ENCODE measurements at regions of chr4 and their contacts with region 1.

Region 1: GRCh38 chr4:128552586-128552907 is 257.0 kb upstream of the JADE1 start:
- DNase-seq: no peak
- ATAC-seq: no peak
- H3K4me3 ChIP-seq: peak overlapping the region in 1 of 2 donors; percentile 61
- H3K4me3 Mint-ChIP-seq: peak overlapping the region; percentile 96 to 98 (median 97)
- H3K27ac ChIP-seq: no peak overlapping the region
- H3K27ac Mint-ChIP-seq: no peak overlapping the region
- H3K4me1 ChIP-seq: peaks cover 7 to 11% of the 10 kb centered on the region in 2 experiments
- H3K4me1 Mint-ChIP-seq: peaks cover 17 to 19% (median 19%) of the 10 kb centered on the region in 3 donors
- H3K27me3 ChIP-seq: peaks cover 0 to 5% of the 10 kb centered on the region in 2 experiments
- H3K27me3 Mint-ChIP-seq: peaks cover 8 to 9% of the 10 kb centered on the region in 2 donors

Region 2: GRCh38 chr4:128757712-128758111 is 205.2 kb after region 1 on chr4:
- CTCF ChIA-PET with region 1: no interaction called
- POLR2A ChIA-PET with region 1: interaction called in 1 of 2 experiments, 13 read pairs
- DNase-seq: no peak
- ATAC-seq: no peak
- H3K4me3 ChIP-seq: no peak overlapping the region
- H3K4me3 Mint-ChIP-seq: no peak overlapping the region
- H3K27ac ChIP-seq: no peak overlapping the region
- H3K27ac Mint-ChIP-seq: no peak overlapping the region
- H3K4me1 ChIP-seq: no peaks in the 10 kb centered on the region
- H3K4me1 Mint-ChIP-seq: no peaks in the 10 kb centered on the region
- H3K27me3 ChIP-seq: peaks cover 0 to 7% of the 10 kb centered on the region in 2 experiments
- H3K27me3 Mint-ChIP-seq: no peaks in the 10 kb centered on the region

Region 3: GRCh38 chr4:129140521-129140920 is 588.0 kb after region 1 on chr4:
- CTCF ChIA-PET with region 1: no interaction called
- POLR2A ChIA-PET with region 1: no interaction called
- DNase-seq: no peak
- ATAC-seq: no peak
- H3K4me3 ChIP-seq: no peak overlapping the region
- H3K4me3 Mint-ChIP-seq: no peak overlapping the region
- H3K27ac ChIP-seq: no peak overlapping the region
- H3K27ac Mint-ChIP-seq: no peak overlapping the region
- H3K4me1 ChIP-seq: no peaks in the 10 kb centered on the region
- H3K4me1 Mint-ChIP-seq: no peaks in the 10 kb centered on the region
- H3K27me3 ChIP-seq: no peaks in the 10 kb centered on the region
- H3K27me3 Mint-ChIP-seq: peaks cover 0 to 9% of the 10 kb centered on the region in 2 donors

Measured in T-cell (primary cell).